Activated T-helper 1 cell treated with anti-CD3 and anti-CD28 coated beads, Interleukin-12 subunit alpha, Interleukin-12 subunit beta, Interleukin-2, Interleukin-4 antibody, amounts not matched to agents 30 ng/mL and 10 ng/mL and 1 ng/mL, durations not matched to agents 14 hours and 24 hours and 36 hours (primary cell): ENCODE measurements at regions of chr6 and their contacts with region 1.

Region 1: GRCh38 chr6:42726485-42727086 is 4.2 kb upstream of the PRPH2 start:
- DNase-seq: peak; percentile 59
- H3K4me3 Mint-ChIP-seq: peak overlapping the region; percentile 75
- H3K27ac Mint-ChIP-seq: peak overlapping the region; percentile 98
- H3K4me1 Mint-ChIP-seq: peaks cover 19% of the 10 kb centered on the region
- H3K27me3 Mint-ChIP-seq: peaks cover 5% of the 10 kb centered on the region

Region 2: GRCh38 chr6:42402184-42402583 is 324.4 kb before region 1 on chr6:
- intact Hi-C with region 1: no loop called
- DNase-seq: peak; percentile 66
- H3K4me3 Mint-ChIP-seq: peak overlapping the region; percentile 68
- H3K27ac Mint-ChIP-seq: peak overlapping the region; percentile 87
- H3K4me1 Mint-ChIP-seq: peaks cover 82% of the 10 kb centered on the region
- H3K27me3 Mint-ChIP-seq: no peaks in the 10 kb centered on the region

Region 3: GRCh38 chr6:42661540-42662153 is 64.9 kb before region 1 on chr6:
- intact Hi-C with region 1: loop called (anchors 1 kb)
- DNase-seq: peak; percentile 62
- H3K4me3 Mint-ChIP-seq: no peak overlapping the region
- H3K27ac Mint-ChIP-seq: no peak overlapping the region
- H3K4me1 Mint-ChIP-seq: peaks cover 6% of the 10 kb centered on the region
- H3K27me3 Mint-ChIP-seq: no peaks in the 10 kb centered on the region

Region 4: DNA sequence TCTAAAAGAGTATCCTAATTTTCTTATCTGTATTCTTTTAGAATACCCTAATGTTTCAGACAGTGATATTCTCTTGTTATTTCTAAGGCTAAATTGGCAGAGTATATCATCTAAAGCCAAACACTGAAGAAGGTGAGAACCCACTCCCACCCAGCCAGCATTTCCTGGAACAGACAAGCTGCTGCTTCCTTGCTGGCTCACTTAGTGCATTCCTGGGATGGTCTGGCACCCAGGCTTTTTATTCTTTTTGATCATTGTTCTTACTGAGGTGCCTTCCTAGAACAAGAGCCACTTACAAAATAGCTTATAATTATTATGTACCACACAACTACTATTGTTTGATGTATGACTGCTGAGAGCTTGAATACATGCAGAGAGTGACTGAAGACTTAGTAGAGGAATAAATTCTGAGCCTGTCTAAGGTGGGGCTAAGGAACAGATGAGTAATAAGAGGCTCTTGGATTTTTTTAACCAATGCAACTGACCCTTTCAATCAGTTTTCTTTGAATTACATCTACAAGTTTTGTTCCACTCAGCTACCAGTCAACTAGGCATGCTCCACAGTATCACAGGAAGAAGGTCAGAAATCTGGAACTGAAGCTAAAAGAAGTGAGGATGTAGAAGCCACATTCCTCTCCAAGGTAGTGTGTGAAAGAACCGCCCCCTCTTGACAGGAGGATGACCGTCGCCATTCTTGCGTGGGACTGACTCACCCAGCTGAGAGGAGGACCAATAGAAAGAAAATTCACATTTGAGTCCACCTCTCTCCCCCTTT is 34.3 kb before region 1 on chr6:
- intact Hi-C with region 1: loop called (anchors 5 kb)
- DNase-seq: no peak
- H3K4me3 Mint-ChIP-seq: no peak overlapping the region
- H3K27ac Mint-ChIP-seq: peak overlapping the region; percentile 58
- H3K4me1 Mint-ChIP-seq: peaks cover 35% of the 10 kb centered on the region
- H3K27me3 Mint-ChIP-seq: no peaks in the 10 kb centered on the region